Esophagus muscularis mucosa (tissue), 4 donors: ENCODE measurements at regions of chr5 and their contacts with region 1.

Region 1: GRCh38 chr5:14871210-14872069 is at the start of gene ANKH:
- DNase-seq: no peak
- H3K4me3 ChIP-seq: peak within 1 kb of the TSS; percentile 77 to 96 (median 91)
- H3K27ac ChIP-seq: peak within 1 kb of the TSS; percentile 96 to 98 (median 96)
- H3K4me1 ChIP-seq: peaks cover 12 to 39% (median 30%) of the 10 kb centered on the region in 4 donors
- H3K27me3 ChIP-seq: no peaks in the 10 kb centered on the region
- CTCF ChIP-seq: peak in 1 of 3 experiments; percentile 27
- EP300 ChIP-seq: no peak
- POLR2A ChIP-seq: no peak
- total RNA-seq, gene ANKH: 33.4 to 49.4 (median 38.0) TPM

Region 2: GRCh38 chr5:14727428-14727865 is 144.0 kb before region 1 on chr5:
- intact Hi-C with region 1: loop called (anchors 5 kb)
- DNase-seq: no peak
- H3K4me3 ChIP-seq: no peak overlapping the region
- H3K27ac ChIP-seq: no peak overlapping the region
- H3K4me1 ChIP-seq: peaks cover 10 to 28% (median 17%) of the 10 kb centered on the region in 4 donors
- H3K27me3 ChIP-seq: no peaks in the 10 kb centered on the region
- CTCF ChIP-seq: peak; percentile 94 to 97 (median 94)
- EP300 ChIP-seq: no peak
- POLR2A ChIP-seq: no peak

Region 3: GRCh38 chr5:14830210-14831005 is 41.0 kb before region 1 on chr5:
- intact Hi-C with region 1: no loop called
- DNase-seq: no peak
- H3K4me3 ChIP-seq: no peak overlapping the region
- H3K27ac ChIP-seq: no peak overlapping the region
- H3K4me1 ChIP-seq: peaks cover 0 to 24% (median 12%) of the 10 kb centered on the region in 4 donors
- H3K27me3 ChIP-seq: no peaks in the 10 kb centered on the region
- CTCF ChIP-seq: no peak
- EP300 ChIP-seq: no peak
- POLR2A ChIP-seq: no peak